Right cardiac atrium (tissue), 5 donors: ENCODE measurements at regions of chr20 and their contacts with region 1.

Region 1: DNA sequence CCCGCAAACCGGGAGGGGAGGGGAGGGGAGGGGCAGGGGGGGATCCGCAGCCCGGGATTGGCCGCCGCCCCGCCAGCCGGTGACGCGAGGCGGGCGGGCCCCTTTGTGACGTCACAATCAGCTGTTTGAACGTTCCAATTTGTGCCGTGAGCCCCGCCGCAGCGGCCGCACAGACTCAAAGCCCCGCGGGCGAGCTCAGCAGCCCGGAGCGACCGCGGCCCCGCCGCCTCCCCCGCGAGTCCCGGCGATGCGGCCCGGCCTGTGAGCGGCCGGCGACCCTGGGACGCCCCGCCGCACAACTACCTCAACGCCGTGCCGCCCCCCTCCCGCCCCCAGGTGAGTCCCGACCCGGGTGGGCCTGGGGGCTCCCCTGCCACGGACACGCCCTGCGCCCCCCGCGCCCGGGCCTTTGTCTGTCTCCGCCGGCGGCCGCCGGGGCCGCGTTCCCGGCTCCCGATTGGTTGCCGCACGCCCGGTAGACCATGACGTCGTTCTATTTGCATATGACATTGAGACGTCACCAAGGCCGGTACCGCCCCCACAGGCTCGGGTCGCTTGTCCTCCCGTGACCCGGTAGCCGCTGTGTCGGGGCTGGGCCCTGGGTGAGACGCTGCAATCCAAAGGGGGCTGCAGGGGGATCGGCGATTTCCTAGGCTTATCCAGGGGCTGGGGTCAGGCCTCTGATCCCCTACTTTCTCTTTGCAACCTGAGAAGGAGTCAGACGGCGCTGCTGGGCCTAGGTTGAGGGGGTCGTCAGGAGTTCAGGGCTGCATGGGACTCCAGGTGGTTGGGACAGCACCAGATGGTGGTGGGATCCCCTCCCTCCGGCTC is at the start of gene TP53INP2:
- DNase-seq: peak; percentile 95 to 98 (median 97)
- ATAC-seq: peak; percentile 80 to 85
- H3K4me3 ChIP-seq: peak within 1 kb of the TSS; percentile 76
- H3K27ac ChIP-seq: peak within 1 kb of the TSS; percentile 97
- H3K4me1 ChIP-seq: peaks cover 3% of the 10 kb centered on the region
- H3K27me3 ChIP-seq: no peaks in the 10 kb centered on the region
- total RNA-seq, gene TP53INP2: 72.7 to 133 (median 113) TPM

Region 2: GRCh38 chr20:34538671-34539123 is 165.7 kb before region 1 on chr20:
- intact Hi-C with region 1: loop called in 1 of 4 experiments (anchors 5 kb)
- DNase-seq: peak; percentile 59 to 80 (median 80)
- ATAC-seq: peak; percentile 37 to 43
- H3K4me3 ChIP-seq: no peak overlapping the region
- H3K27ac ChIP-seq: no peak overlapping the region
- H3K4me1 ChIP-seq: no peaks in the 10 kb centered on the region
- H3K27me3 ChIP-seq: no peaks in the 10 kb centered on the region

Region 3: GRCh38 chr20:34562643-34563042 is 141.7 kb before region 1 on chr20:
- intact Hi-C with region 1: loop called in 1 of 4 experiments (anchors 10 kb)
- DNase-seq: peak in 2 of 3 donors; percentile 61 to 66
- ATAC-seq: no peak
- H3K4me3 ChIP-seq: no peak overlapping the region
- H3K27ac ChIP-seq: no peak overlapping the region
- H3K4me1 ChIP-seq: no peaks in the 10 kb centered on the region
- H3K27me3 ChIP-seq: no peaks in the 10 kb centered on the region

Region 4: DNA sequence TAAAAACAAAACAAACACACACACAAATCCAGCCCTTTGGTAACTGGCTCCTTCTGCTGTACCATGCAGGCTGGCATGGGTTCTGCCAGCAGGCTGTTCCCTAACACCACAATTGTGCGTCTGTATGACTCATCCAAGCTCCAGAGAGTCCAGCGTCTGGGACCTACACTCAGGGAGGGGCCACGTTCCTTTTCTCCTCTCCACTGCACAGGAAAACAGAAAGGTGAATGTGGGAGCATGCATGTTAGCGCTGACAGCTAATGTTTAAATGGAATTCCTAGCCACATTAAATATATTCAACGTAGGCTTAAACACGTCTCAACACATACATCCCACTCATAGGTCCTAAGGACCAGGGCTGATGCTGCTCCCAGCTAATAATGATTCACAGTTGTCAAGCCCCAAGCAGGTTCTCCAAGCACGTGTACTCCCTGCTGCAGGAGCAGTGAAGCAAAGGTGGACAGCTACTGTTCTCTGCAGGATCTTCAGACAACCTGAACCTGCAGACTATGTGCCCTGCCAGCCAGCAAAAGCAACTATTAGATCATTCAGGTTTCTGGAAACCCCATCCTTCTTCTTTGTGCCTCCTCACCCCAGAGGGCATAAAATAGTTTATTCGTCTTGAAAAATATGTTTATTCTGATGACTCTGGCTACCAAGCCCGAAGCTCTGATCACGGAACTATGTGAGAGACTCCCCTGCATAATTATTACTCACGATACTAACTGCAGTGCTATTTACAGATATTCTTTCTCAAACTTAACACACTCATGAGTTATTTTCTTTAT is 125.0 kb before region 1 on chr20:
- intact Hi-C with region 1: loop called in 1 of 4 experiments (anchors 10 kb)
- DNase-seq: peak; percentile 64 to 85 (median 82)
- ATAC-seq: peak; percentile 86 to 87
- H3K4me3 ChIP-seq: no peak overlapping the region
- H3K27ac ChIP-seq: no peak overlapping the region
- H3K4me1 ChIP-seq: peaks cover 5% of the 10 kb centered on the region
- H3K27me3 ChIP-seq: no peaks in the 10 kb centered on the region